ENCODE measurements at regions of chr2 and their contacts with region 1.

Region 1: DNA sequence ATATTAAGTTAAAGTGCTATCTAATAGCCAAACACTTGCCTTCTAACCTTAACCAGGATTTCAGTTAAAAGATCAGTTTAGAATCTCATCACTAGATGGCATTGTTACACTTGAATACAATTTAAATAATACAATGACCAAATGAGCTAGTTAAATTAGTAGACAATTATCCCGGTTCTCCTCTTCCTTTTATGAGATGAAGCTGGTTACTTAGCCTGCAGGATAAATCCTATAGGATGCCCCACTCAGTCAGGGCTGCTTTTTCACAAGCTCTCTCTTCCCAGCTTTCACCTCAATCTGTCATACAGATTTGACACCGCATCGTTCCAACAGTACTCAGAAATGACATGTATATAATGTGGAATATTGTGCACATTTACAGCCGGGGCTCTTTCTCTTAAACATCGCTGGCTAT is 678.8 kb downstream of the KCNJ3 start:
- DNase-seq: no peak
- CTCF ChIP-seq: peak; percentile 44

Region 2: DNA sequence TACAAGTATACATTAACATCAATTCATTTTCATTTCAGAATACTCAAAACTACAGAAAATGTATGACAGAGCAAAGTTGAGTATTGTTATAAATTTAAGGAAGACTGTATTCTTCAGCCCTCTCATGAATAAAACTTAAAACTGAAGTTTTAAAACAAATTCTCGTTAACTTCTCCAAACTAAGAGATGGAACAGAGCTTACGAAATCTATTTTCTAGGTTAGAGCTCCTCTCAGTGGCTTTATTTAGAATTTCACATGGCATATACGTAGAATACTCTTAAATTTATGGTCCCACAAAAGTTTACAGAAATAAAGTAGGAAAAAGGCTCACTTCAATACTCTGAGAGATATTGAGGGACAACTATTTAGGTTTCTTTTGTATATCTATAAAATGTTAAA is 66.7 kb before region 1 on chr2:
- CTCF ChIA-PET with region 1: no interaction called
- POLR2A ChIA-PET with region 1: no interaction called
- DNase-seq: no peak
- CTCF ChIP-seq: peak; percentile 52

Region 3: GRCh38 chr2:155815886-155816285 is 438.6 kb after region 1 on chr2:
- CTCF ChIA-PET with region 1: interaction called, 16 read pairs
- POLR2A ChIA-PET with region 1: no interaction called
- DNase-seq: peak; percentile 15
- CTCF ChIP-seq: peak; percentile 62

Region 4: DNA sequence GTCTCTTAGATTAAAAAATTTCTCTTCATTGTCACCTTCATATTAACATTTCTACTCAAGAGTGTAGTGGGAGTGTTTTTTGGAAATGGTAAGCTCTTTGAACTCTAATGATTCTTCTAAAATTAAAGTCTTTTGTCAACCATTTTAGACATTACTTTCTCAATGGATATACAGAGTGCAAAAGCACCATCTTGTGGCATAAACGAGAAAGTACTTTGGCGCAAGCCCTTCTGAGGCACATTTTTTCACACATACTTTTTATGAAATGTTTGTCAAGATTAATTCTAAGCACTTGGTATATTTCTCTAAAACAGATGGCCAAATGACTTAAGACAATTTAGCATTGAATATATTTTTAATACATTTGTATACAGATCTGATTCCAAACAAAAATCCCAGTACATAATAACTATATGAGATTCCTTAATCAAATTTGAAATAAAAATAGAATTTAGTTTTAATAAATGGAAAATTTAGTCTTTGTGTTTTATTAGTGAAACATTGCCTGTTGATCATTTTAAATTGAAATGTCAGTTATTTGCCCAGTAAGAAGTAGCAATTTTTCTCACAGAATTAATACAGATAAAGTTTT is 1816.9 kb after region 1 on chr2:
- CTCF ChIA-PET with region 1: interaction called, 14 read pairs
- POLR2A ChIA-PET with region 1: no interaction called
- DNase-seq: peak; percentile 49
- CTCF ChIP-seq: peak; percentile 73

Measured in GM10248 (cell line).